ENCODE measurements at regions of chr11 and their contacts with region 1.

Region 1: DNA sequence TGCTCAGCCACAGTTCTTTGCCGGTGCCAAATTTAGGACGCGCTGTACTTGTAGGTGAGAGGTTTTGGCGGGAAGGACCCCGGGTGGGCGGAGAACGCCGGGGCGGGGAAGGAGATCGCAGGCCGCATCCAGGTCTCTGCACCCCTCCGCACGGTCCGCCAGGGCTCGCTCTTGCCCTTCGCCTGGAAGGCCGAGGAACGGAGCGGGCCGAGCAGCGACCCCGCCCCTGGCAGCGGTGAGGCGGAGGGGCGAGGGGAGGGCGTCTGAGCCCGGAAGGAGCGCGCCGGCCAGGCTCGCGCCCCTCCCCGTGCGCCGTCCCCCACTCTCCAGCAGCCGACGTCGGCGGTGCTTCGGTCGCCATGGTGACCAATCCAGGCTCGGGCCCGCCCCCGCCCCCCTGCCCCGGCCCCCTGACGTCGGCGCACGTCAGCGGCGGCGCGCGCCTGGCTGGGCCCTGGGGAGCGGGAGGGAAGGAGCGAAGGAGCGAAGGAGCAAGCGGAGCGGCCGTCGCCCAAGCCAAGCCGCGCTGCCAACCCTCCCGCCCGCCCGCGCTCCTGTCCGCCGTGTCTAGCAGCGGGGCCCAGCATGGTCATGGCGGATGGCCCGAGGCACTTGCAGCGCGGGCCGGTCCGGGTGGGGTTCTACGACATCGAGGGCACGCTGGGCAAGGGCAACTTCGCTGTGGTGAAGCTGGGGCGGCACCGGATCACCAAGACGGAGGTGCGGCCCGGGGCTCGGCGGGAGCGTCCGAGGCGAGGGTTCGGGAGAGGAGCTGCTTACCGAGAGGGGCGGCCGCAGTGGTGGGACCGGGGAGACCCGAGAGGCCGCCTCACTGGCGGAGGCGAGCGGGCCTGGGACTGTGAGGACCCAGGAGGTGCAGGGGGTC is at the start of gene SIK2:
- DNase-seq: peak; percentile 78 to 96 (median 90)
- ATAC-seq: peak; percentile 83
- H3K4me3 ChIP-seq: peak within 1 kb of the TSS; percentile 70 to 95
- H3K4me3 Mint-ChIP-seq: peak within 1 kb of the TSS; percentile 94
- H3K27ac ChIP-seq: peak within 1 kb of the TSS; percentile 77 to 94
- H3K27ac Mint-ChIP-seq: peak within 1 kb of the TSS; percentile 94
- H3K4me1 ChIP-seq: peaks cover 24% of the 10 kb centered on the region
- H3K4me1 Mint-ChIP-seq: peaks cover 27% of the 10 kb centered on the region
- H3K27me3 ChIP-seq: no peaks in the 10 kb centered on the region
- H3K27me3 Mint-ChIP-seq: no peaks in the 10 kb centered on the region
- CTCF ChIP-seq: peak; percentile 57
- total RNA-seq, gene SIK2: 2.9 to 3.2 TPM

Region 2: GRCh38 chr11:110305169-110306018 is 1296.8 kb before region 1 on chr11:
- CTCF ChIA-PET with region 1: no interaction called
- POLR2A ChIA-PET with region 1: no interaction called
- intact Hi-C with region 1: no loop called
- DNase-seq: no peak
- ATAC-seq: no peak
- H3K4me3 ChIP-seq: no peak overlapping the region
- H3K4me3 Mint-ChIP-seq: no peak overlapping the region
- H3K27ac ChIP-seq: no peak overlapping the region
- H3K27ac Mint-ChIP-seq: no peak overlapping the region
- H3K4me1 ChIP-seq: no peaks in the 10 kb centered on the region
- H3K4me1 Mint-ChIP-seq: no peaks in the 10 kb centered on the region
- H3K27me3 ChIP-seq: no peaks in the 10 kb centered on the region
- H3K27me3 Mint-ChIP-seq: no peaks in the 10 kb centered on the region
- CTCF ChIP-seq: no peak

Region 3: DNA sequence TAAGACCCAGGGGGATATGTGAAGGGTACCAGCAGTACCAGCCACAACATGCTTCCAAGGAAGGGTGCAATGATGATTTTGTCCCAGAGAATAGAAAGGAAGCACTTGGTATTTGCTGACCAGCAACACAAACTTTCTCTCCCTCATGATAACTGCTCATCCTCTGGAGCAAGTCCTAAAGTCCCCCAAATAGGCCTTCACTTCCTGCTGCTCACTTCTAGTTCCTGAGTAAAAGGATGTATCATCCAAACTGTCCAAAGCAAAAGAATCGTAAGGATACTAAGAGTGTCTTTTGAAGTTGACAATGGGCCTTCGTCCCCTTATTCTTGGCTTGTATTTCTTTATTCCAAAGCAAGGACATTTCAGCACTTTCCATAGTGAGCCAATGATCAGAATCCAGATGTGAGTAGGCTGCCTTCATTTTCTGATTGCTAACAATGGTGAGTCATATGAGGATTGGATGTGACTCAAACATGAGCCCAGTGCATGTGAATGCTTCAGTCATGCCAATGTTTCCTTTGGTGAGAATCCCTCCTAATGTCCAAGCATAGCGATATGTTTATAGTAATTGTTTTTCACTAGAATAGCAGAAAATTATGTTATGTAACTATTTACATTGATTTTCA is 600.1 kb before region 1 on chr11:
- CTCF ChIA-PET with region 1: no interaction called
- POLR2A ChIA-PET with region 1: no interaction called
- intact Hi-C with region 1: no loop called
- DNase-seq: no peak
- ATAC-seq: no peak
- H3K4me3 ChIP-seq: no peak overlapping the region
- H3K4me3 Mint-ChIP-seq: no peak overlapping the region
- H3K27ac ChIP-seq: no peak overlapping the region
- H3K27ac Mint-ChIP-seq: no peak overlapping the region
- H3K4me1 ChIP-seq: no peaks in the 10 kb centered on the region
- H3K4me1 Mint-ChIP-seq: no peaks in the 10 kb centered on the region
- H3K27me3 ChIP-seq: no peaks in the 10 kb centered on the region
- H3K27me3 Mint-ChIP-seq: no peaks in the 10 kb centered on the region
- CTCF ChIP-seq: no peak

Region 4: GRCh38 chr11:111766093-111766833 is 164.0 kb after region 1 on chr11 and contains the start of gene PPP2R1B:
- CTCF ChIA-PET with region 1: interaction called, 5 read pairs
- POLR2A ChIA-PET with region 1: interaction called, 5 read pairs
- intact Hi-C with region 1: loop called (anchors 1 kb)
- DNase-seq: peak; percentile 33 to 83 (median 73)
- ATAC-seq: peak; percentile 98
- H3K4me3 ChIP-seq: peak within 1 kb of the TSS; percentile 86 to 97
- H3K4me3 Mint-ChIP-seq: peak within 1 kb of the TSS; percentile 99
- H3K27ac ChIP-seq: peak within 1 kb of the TSS; percentile 63 to 67
- H3K27ac Mint-ChIP-seq: peak within 1 kb of the TSS; percentile 97
- H3K4me1 ChIP-seq: peaks cover 12% of the 10 kb centered on the region
- H3K4me1 Mint-ChIP-seq: peaks cover 39% of the 10 kb centered on the region
- H3K27me3 ChIP-seq: no peaks in the 10 kb centered on the region
- H3K27me3 Mint-ChIP-seq: no peaks in the 10 kb centered on the region
- CTCF ChIP-seq: no peak
- total RNA-seq, gene PPP2R1B: 47.4 to 53.8 TPM

Region 5: GRCh38 chr11:111841370-111842053 is 239.3 kb after region 1 on chr11:
- CTCF ChIA-PET with region 1: interaction called, 6 read pairs
- POLR2A ChIA-PET with region 1: no interaction called
- intact Hi-C with region 1: loop called in 1 of 2 experiments (anchors 1 kb)
- DNase-seq: peak; percentile 66 to 92 (median 85)
- ATAC-seq: peak; percentile 95
- H3K4me3 ChIP-seq: no peak overlapping the region
- H3K4me3 Mint-ChIP-seq: no peak overlapping the region
- H3K27ac ChIP-seq: no peak overlapping the region
- H3K27ac Mint-ChIP-seq: no peak overlapping the region
- H3K4me1 ChIP-seq: no peaks in the 10 kb centered on the region
- H3K4me1 Mint-ChIP-seq: peaks cover 6% of the 10 kb centered on the region
- H3K27me3 ChIP-seq: no peaks in the 10 kb centered on the region
- H3K27me3 Mint-ChIP-seq: no peaks in the 10 kb centered on the region
- CTCF ChIP-seq: peak; percentile 87

Region 6: GRCh38 chr11:111870886-111871692 is 268.9 kb after region 1 on chr11 and contains the start of gene ALG9:
- CTCF ChIA-PET with region 1: no interaction called
- POLR2A ChIA-PET with region 1: no interaction called
- intact Hi-C with region 1: loop called (anchors 1 to 2 kb)
- DNase-seq: peak; percentile 80 to 93 (median 89)
- ATAC-seq: peak; percentile 87
- H3K4me3 ChIP-seq: peak within 1 kb of the TSS; percentile 51 to 70
- H3K4me3 Mint-ChIP-seq: peak within 1 kb of the TSS; percentile 93
- H3K27ac ChIP-seq: peak within 1 kb of the TSS; percentile 76 to 77
- H3K27ac Mint-ChIP-seq: peak within 1 kb of the TSS; percentile 97
- H3K4me1 ChIP-seq: peaks cover 18% of the 10 kb centered on the region
- H3K4me1 Mint-ChIP-seq: peaks cover 34% of the 10 kb centered on the region
- H3K27me3 ChIP-seq: no peaks in the 10 kb centered on the region
- H3K27me3 Mint-ChIP-seq: no peaks in the 10 kb centered on the region
- CTCF ChIP-seq: peak; percentile 18
- total RNA-seq, gene ALG9: 35.5 to 36.9 TPM

Region 7: GRCh38 chr11:112074026-112074811 is 472.0 kb after region 1 on chr11 and contains the start of gene NKAPD1:
- CTCF ChIA-PET with region 1: no interaction called
- POLR2A ChIA-PET with region 1: no interaction called
- intact Hi-C with region 1: loop called in 1 of 2 experiments (anchors 5 kb)
- DNase-seq: peak; percentile 64 to 92 (median 82)
- ATAC-seq: peak; percentile 79
- H3K4me3 ChIP-seq: peak within 1 kb of the TSS; percentile 79 to 87
- H3K4me3 Mint-ChIP-seq: peak within 1 kb of the TSS; percentile 96
- H3K27ac ChIP-seq: peak within 1 kb of the TSS; percentile 70 to 80
- H3K27ac Mint-ChIP-seq: peak within 1 kb of the TSS; percentile 95
- H3K4me1 ChIP-seq: peaks cover 12% of the 10 kb centered on the region
- H3K4me1 Mint-ChIP-seq: peaks cover 33% of the 10 kb centered on the region
- H3K27me3 ChIP-seq: no peaks in the 10 kb centered on the region
- H3K27me3 Mint-ChIP-seq: peaks cover 7% of the 10 kb centered on the region
- CTCF ChIP-seq: no peak
- total RNA-seq, gene NKAPD1: 16.3 to 17.0 TPM